Activated T-helper 2 cell treated with anti-CD3 and anti-CD28 coated beads, Interferon-gamma antibody, Interleukin-2, Interleukin-4, amounts not matched to agents 10 μg/mL and 5 μg/mL and 100 μg/mL, durations not matched to agents 14 hours and 24 hours and 36 hours (primary cell): ENCODE measurements at regions of chr21 and their contacts with region 1.

Region 1: GRCh38 chr21:45973659-45974072 is 7.9 kb upstream of the COL6A1 start:
- DNase-seq: peak; percentile 61
- H3K4me3 Mint-ChIP-seq: peak overlapping the region; percentile 79
- H3K27ac Mint-ChIP-seq: no peak overlapping the region
- H3K4me1 Mint-ChIP-seq: peaks cover 10% of the 10 kb centered on the region
- H3K27me3 Mint-ChIP-seq: peaks cover 23% of the 10 kb centered on the region

Region 2: GRCh38 chr21:45670731-45671130 is 302.9 kb before region 1 on chr21:
- intact Hi-C with region 1: no loop called
- DNase-seq: no peak
- H3K4me3 Mint-ChIP-seq: no peak overlapping the region
- H3K27ac Mint-ChIP-seq: no peak overlapping the region
- H3K4me1 Mint-ChIP-seq: peaks cover 7% of the 10 kb centered on the region
- H3K27me3 Mint-ChIP-seq: no peaks in the 10 kb centered on the region

Region 3: GRCh38 chr21:45983981-45984551 is 10.4 kb after region 1 on chr21:
- intact Hi-C with region 1: no loop called
- DNase-seq: no peak
- H3K4me3 Mint-ChIP-seq: no peak overlapping the region
- H3K27ac Mint-ChIP-seq: no peak overlapping the region
- H3K4me1 Mint-ChIP-seq: no peaks in the 10 kb centered on the region
- H3K27me3 Mint-ChIP-seq: peaks cover 15% of the 10 kb centered on the region

Region 4: GRCh38 chr21:46009951-46010705 is 36.5 kb after region 1 on chr21:
- intact Hi-C with region 1: no loop called
- DNase-seq: peak; percentile 4
- H3K4me3 Mint-ChIP-seq: no peak overlapping the region
- H3K27ac Mint-ChIP-seq: no peak overlapping the region
- H3K4me1 Mint-ChIP-seq: no peaks in the 10 kb centered on the region
- H3K27me3 Mint-ChIP-seq: peaks cover 23% of the 10 kb centered on the region

Region 5: DNA sequence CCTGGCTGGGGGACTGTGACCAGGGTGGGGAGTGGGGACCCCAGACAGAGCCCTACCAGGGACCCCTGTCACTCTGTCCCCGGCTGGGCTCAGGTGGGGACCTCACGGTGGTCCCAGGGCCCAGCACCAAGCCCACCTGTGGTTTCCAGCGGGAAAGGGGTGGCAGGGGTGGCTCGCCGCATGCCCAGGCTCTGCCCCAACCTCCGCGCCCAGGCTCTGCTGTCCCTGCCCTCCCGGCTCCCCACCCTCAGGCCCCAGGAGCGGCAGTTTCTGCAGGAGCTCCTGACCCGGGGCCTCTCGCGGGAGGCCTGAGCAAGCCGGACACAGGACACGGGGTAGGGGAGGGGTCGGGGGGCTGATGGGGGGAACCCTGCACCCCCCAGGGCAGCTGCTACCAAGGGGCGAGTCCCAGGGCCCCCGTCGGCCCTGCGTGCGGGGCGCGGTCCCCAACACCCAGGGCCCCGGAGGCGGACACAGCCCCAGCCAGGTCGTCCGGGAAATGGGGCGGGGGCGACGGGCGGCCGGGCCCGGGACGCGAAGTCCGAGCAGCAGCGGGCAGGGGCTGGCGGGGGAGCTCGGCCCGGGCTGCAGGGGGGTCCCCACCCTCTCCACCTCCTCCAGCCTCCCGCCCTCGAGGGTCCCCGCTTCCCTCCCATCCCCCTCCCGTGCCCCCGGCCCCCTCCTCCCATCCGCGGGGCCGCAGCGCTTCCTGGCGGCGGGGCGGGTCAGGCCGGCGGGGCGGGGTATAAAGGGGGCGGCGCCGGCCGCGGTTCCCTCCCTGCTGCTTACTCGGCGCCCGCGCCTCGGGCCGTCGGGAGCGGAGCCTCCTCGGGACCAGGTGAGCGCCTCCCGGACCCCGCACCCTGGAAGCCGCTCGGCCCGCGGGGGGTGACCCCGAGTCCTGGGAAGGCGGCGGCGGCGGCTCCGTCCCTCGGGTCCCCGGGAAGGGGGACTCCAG is 123.9 kb after region 1 on chr21 and contains the start of gene COL6A2:
- intact Hi-C with region 1: loop called (anchors 2 kb)
- DNase-seq: peak; percentile 39
- H3K4me3 Mint-ChIP-seq: peak within 1 kb of the TSS; percentile 54
- H3K27ac Mint-ChIP-seq: no peak within 1 kb of the TSS
- H3K4me1 Mint-ChIP-seq: no peaks in the 10 kb centered on the region
- H3K27me3 Mint-ChIP-seq: peaks cover 33% of the 10 kb centered on the region
- total RNA-seq, gene COL6A2: 2.2 TPM in 2 replicates

Region 6: GRCh38 chr21:46144464-46145070 is 170.9 kb after region 1 on chr21:
- intact Hi-C with region 1: loop called (anchors 5 kb)
- DNase-seq: no peak
- H3K4me3 Mint-ChIP-seq: no peak overlapping the region
- H3K27ac Mint-ChIP-seq: peak overlapping the region; percentile 86
- H3K4me1 Mint-ChIP-seq: peaks cover 10% of the 10 kb centered on the region
- H3K27me3 Mint-ChIP-seq: no peaks in the 10 kb centered on the region

Region 7: DNA sequence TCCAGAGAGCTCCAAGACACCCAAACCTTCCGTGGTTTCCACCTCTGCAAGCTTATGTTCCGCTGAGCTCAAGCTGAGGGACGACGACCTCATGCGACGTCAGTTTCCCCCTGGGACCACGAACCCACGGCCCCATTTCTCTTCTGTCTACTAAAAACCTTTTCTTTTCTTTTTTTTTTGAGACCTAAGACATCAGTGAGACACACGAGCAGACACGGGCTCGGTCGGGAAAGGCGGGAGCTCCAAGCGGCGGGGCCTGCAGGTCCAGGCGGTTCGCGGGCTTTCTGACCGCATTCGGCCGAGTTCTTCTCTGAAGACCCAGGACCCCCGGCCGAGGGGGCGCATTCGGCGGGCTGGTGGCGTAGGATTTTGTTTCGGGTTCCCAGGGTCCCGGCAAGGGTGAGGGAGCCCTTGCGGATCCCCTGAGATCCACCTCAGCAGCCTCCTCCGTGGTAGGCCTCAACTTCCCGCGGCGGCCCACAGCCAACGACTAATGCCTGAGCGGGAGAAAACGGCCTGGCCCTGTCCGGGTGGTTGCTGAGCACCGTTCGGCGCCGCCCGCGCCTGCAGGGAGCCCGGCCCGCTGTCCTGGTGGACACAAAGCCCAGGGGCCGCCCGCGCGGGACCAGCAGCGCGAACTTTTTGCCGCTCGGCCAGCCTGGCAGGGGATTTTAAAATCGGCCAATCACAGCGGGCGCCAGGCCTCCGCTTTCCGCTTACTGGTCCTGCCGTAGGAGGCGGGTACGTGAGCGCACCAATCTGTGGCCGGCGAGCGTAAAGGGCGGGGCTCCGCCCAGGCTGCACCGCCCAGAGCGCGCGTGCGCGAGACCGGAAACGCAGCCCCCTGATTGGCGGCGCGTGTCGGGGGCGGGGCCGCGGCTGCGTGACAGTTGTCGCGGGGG is 349.8 kb after region 1 on chr21 and contains the start of gene C21orf58:
- intact Hi-C with region 1: loop called (anchors 10 kb)
- DNase-seq: peak; percentile 98
- H3K4me3 Mint-ChIP-seq: peak within 1 kb of the TSS; percentile 97
- H3K27ac Mint-ChIP-seq: peak within 1 kb of the TSS; percentile 99
- H3K4me1 Mint-ChIP-seq: peaks cover 30% of the 10 kb centered on the region
- H3K27me3 Mint-ChIP-seq: no peaks in the 10 kb centered on the region
- total RNA-seq, gene C21orf58: 32.2 and 32.8 TPM in 2 replicates